A549 (cell line): ENCODE measurements at regions of chr1 and their contacts with region 1.

Region 1: GRCh38 chr1:38908821-38909220 is 27.4 kb upstream of the GJA9 start:
- DNase-seq: no peak
- ATAC-seq: no peak
- H3K4me3 ChIP-seq: no peak overlapping the region
- H3K27ac ChIP-seq: no peak overlapping the region
- H3K4me1 ChIP-seq: no peaks in the 10 kb centered on the region
- CTCF ChIP-seq: no peak
- EP300 ChIP-seq: no peak
- POLR2A ChIP-seq: no peak
- RAD21 ChIP-seq: no peak

Region 2: GRCh38 chr1:38891753-38892152 is 17.1 kb before region 1 on chr1:
- CTCF ChIA-PET with region 1: no interaction called
- POLR2A ChIA-PET with region 1: no interaction called
- DNase-seq: peak; percentile 12 to 18
- ATAC-seq: peak; percentile 61 to 66; a peak in 5 of 6 replicates
- H3K4me3 ChIP-seq: no peak overlapping the region
- H3K27ac ChIP-seq: no peak overlapping the region
- H3K4me1 ChIP-seq: no peaks in the 10 kb centered on the region
- CTCF ChIP-seq: no peak
- EP300 ChIP-seq: no peak
- POLR2A ChIP-seq: no peak
- RAD21 ChIP-seq: no peak

Region 3: GRCh38 chr1:38932571-38932970 is 23.8 kb after region 1 on chr1:
- CTCF ChIA-PET with region 1: no interaction called
- POLR2A ChIA-PET with region 1: interaction called, 11 read pairs
- DNase-seq: no peak
- ATAC-seq: no peak
- H3K4me3 ChIP-seq: no peak overlapping the region
- H3K27ac ChIP-seq: no peak overlapping the region
- H3K4me1 ChIP-seq: no peaks in the 10 kb centered on the region
- CTCF ChIP-seq: no peak
- EP300 ChIP-seq: no peak
- POLR2A ChIP-seq: no peak
- RAD21 ChIP-seq: no peak